Panc1 (cell line): ENCODE measurements at regions of chr12 and their contacts with region 1.

Region 1: DNA sequence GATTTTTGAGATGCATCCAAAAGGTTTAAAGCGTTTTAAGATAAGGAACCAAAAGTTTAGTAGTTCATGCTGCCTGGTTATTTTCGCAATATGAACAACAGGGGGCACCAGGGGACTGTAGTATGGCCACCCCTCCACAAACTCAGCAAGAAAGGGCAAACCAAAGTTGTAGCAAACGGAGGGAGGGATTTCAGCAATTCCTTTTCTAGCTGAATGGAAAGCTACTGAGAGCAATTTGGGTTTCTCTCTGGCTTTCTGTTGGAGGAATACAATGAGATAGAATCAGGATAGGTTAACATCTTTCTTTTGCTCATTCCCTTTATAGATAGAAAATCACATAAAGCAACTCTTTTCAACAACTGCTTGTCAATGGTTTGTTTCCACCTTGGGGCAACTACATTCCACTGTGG is 62.5 kb downstream of the DRAM1 start:
- DNase-seq: peak; percentile 18
- ATAC-seq: peak; percentile 79; the same call in 1 of the 2 replicates
- H3K4me3 ChIP-seq: no peak overlapping the region
- H3K27ac ChIP-seq: no peak overlapping the region
- H3K4me1 ChIP-seq: no peaks in the 10 kb centered on the region
- H3K27me3 ChIP-seq: peaks cover 10% of the 10 kb centered on the region
- CTCF ChIP-seq: peak; percentile 82

Region 2: GRCh38 chr12:101470939-101471338 is 468.9 kb before region 1 on chr12:
- CTCF ChIA-PET with region 1: no interaction called
- POLR2A ChIA-PET with region 1: no interaction called
- in situ Hi-C with region 1: no loop called
- intact Hi-C with region 1: no loop called
- DNase-seq: no peak
- ATAC-seq: no peak
- H3K4me3 ChIP-seq: no peak overlapping the region
- H3K27ac ChIP-seq: no peak overlapping the region
- H3K4me1 ChIP-seq: no peaks in the 10 kb centered on the region
- H3K27me3 ChIP-seq: no peaks in the 10 kb centered on the region
- CTCF ChIP-seq: no peak

Region 3: DNA sequence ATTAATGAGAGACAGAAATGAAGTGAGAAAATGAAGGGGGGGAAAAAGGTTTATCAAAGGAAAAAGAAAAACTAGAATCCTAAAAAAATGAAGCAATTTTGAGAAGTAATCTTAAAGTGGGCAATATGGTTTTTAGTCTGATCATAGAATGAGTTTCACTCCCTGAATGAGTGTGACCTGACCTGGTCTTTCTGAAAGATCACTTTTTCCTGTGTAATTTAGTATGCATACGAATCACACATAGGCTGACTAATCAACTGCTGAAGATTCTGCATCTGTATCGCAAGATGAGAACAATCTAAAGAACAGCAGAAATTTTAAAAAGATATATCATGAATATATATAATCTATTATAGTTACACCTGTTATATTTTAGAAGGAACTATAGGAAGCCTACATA is 120.4 kb before region 1 on chr12:
- CTCF ChIA-PET with region 1: no interaction called
- POLR2A ChIA-PET with region 1: no interaction called
- in situ Hi-C with region 1: no loop called
- intact Hi-C with region 1: no loop called
- DNase-seq: no peak
- ATAC-seq: no peak
- H3K4me3 ChIP-seq: no peak overlapping the region
- H3K27ac ChIP-seq: no peak overlapping the region
- H3K4me1 ChIP-seq: no peaks in the 10 kb centered on the region
- H3K27me3 ChIP-seq: no peaks in the 10 kb centered on the region
- CTCF ChIP-seq: no peak

Region 4: DNA sequence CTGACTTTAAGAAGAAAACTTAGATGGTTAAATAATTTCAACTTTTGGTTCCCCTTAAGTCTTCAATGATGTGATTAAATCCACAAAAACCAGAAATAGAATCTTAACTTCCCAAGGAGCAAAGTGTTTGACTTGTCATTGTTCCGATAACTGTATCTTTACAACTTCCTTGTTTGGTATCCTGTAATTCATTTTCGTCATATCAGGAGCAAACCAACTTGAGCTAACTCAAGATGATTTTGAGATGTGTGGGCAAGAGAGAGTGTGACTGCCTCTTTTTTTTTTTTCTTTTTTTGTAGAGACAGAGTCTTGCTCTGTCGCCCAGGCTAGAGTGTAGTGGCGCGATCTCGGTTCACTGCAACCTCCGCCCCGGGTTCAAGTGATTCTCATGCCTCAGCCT is 37.2 kb before region 1 on chr12:
- CTCF ChIA-PET with region 1: no interaction called
- POLR2A ChIA-PET with region 1: interaction called, 14 read pairs
- in situ Hi-C with region 1: no loop called
- intact Hi-C with region 1: no loop called
- DNase-seq: no peak
- ATAC-seq: no peak
- H3K4me3 ChIP-seq: no peak overlapping the region
- H3K27ac ChIP-seq: no peak overlapping the region
- H3K4me1 ChIP-seq: no peaks in the 10 kb centered on the region
- H3K27me3 ChIP-seq: no peaks in the 10 kb centered on the region
- CTCF ChIP-seq: no peak

Region 5: GRCh38 chr12:102484428-102484958 is 544.6 kb after region 1 on chr12:
- CTCF ChIA-PET with region 1: no interaction called
- POLR2A ChIA-PET with region 1: no interaction called
- in situ Hi-C with region 1: no loop called
- intact Hi-C with region 1: loop called (anchors 10 kb)
- DNase-seq: peak; percentile 18
- ATAC-seq: no peak
- H3K4me3 ChIP-seq: peak overlapping the region; percentile 32 to 57
- H3K27ac ChIP-seq: no peak overlapping the region
- H3K4me1 ChIP-seq: no peaks in the 10 kb centered on the region
- H3K27me3 ChIP-seq: no peaks in the 10 kb centered on the region
- CTCF ChIP-seq: peak; percentile 94

Region 6: DNA sequence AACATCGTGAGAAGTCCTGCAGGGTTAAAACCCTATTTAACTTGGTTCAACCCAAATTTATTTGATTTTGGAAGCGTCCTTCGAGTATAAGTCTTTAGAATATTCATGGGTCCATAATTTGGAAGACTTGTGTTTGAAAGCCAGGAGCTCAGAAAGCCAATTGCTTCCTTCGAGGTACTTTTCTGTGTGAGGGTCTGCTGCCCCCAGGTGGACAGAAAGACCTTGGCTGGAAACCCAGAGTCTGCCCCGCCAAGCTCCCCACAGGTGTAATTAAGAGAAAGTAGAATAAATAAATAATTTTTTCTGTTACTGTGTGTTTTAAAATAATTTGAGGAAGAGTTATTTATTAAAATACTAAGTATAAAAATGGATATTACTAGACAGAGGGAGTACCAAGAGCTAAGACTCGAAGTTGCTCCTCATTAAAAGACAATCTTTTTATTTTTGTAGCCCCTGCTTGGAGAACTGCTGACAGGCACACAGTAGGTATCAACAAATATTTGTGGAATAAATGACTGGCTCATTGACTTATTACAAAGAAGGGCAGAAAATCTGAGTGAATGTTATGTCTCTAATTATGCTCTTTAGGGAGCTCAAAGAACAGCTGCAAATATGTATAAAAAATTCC is 871.4 kb after region 1 on chr12:
- CTCF ChIA-PET with region 1: no interaction called
- POLR2A ChIA-PET with region 1: no interaction called
- in situ Hi-C with region 1: no loop called
- intact Hi-C with region 1: loop called (anchors 5 kb)
- DNase-seq: peak; percentile 2
- ATAC-seq: no peak
- H3K4me3 ChIP-seq: no peak overlapping the region
- H3K27ac ChIP-seq: no peak overlapping the region
- H3K4me1 ChIP-seq: no peaks in the 10 kb centered on the region
- H3K27me3 ChIP-seq: no peaks in the 10 kb centered on the region
- CTCF ChIP-seq: peak; percentile 82